GM10248 (cell line): ENCODE measurements at regions of chr11 and their contacts with region 1.

Region 1: DNA sequence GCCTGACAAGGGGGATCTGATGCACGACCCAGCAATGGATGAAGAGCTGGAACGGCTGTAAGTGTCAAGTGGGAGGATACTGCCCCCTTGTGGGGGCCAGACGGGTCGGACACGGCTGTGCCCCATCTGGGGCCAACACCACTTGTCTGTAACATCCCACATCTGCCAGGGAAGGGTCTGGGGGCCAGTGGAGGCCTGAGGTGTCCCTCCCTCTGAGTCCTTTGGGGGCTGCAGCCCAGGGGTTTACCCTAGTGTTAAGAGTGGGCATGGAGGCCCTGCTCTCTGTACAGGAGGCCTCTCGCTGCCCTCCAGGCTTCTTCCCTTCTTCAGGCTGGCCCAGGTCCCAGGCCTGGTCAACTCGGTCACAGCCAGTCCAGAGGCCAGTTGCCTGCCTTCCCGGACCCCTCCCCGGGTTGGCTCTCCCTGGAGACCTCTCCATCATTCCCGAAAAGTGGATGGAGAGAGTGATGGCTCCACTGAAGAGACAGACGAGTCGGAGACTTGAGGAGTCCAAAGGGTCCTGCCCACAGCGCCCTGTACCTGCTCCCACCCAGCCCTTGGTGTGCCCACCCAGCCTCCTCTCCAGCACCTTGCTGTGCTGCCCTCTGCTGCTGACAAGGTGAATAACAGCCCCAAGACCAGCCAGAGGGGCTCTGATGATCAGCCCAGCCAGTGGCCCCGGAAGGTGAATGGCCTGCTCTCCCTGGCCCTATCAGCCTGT is 15.4 kb downstream of the ARFGAP2 start:
- DNase-seq: peak; percentile 83
- CTCF ChIP-seq: peak; percentile 76

Region 2: GRCh38 chr11:46889689-46890475 is 271.4 kb before region 1 on chr11:
- CTCF ChIA-PET with region 1: interaction called, 104 read pairs
- POLR2A ChIA-PET with region 1: no interaction called
- DNase-seq: peak; percentile 83
- CTCF ChIP-seq: peak; percentile 78

Region 3: DNA sequence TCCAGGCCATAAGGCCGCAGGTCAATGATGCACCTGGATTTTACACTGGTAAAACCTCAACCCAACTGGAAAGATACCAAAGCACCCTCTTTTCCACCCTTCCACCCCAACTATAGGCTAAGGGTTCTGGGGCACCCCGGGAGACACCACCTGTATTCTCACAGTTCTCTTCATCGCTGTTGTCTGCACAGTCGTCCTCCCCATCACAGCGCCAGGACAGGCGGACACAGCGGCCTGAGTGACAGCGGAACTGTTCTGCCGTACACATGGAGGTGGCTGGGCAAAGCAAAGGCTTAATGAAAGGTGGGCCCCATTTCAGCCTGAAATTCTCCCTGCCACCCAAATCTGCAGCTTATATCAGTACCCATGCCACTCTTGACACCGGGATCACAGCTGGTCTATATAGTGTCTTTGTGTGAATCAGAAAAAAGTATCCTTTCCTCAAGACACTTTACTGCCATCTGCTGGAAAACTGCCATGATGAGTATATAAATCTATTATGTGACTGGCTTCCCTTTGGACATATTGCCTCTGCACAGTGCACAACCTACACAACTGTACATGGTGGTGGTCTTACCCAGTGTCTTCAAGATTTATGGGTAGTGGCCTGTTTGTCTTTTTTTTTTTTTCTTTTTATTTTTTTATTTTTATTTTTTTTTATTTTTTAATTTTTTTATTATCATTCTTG is 264.4 kb before region 1 on chr11:
- CTCF ChIA-PET with region 1: interaction called, 84 read pairs
- POLR2A ChIA-PET with region 1: no interaction called
- DNase-seq: peak; percentile 44
- CTCF ChIP-seq: peak; percentile 9

Region 4: GRCh38 chr11:47186076-47186936 is 25.0 kb after region 1 on chr11 and contains the start of gene PACSIN3:
- CTCF ChIA-PET with region 1: no interaction called
- POLR2A ChIA-PET with region 1: no interaction called
- DNase-seq: peak; percentile 75
- CTCF ChIP-seq: no peak